CD14-positive monocyte (primary cell): ENCODE measurements at regions of chrX and their contacts with region 1.

Region 1: DNA sequence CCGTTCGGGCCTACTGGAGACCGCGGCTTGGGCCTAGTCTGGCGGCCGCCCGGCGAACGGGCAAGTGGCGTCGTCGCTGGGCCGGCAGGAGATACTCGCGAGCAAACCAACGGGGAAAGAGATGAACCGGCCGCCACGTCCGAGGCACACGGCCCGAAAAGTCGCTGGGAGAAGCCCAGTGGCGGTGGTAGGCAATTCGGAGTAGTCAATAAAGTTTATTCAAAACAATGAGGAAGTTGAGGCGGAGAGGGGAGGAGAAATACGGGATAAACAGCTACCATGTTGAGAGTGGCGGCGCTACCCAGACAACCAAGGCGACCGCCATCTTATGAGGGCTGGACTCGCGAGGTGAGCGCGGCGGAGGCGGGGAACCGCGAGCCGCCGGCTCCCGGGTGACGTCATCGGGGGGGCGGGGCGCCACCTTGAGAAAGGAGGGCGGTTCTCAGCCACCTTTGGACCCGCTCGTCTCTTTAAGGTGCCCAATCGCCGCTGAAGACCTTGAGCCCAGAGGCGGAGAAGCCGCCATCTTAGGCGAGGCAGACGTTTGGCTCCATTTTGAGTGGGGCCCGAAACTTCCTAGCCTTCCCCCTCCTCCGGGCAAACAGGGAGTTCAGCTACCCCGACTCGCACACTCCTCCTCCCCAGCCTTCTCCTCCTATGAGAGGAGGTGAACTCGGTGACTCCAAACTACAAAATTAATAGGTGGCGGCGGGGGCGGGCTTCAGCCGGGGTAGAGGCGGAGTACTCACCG is at the start of gene PHF8:
- DNase-seq: peak; percentile 88 to 94 (median 94)
- H3K4me3 ChIP-seq: peak within 1 kb of the TSS; percentile 67 to 86 (median 83)
- H3K4me3 Mint-ChIP-seq: peak within 1 kb of the TSS; percentile 91 to 96
- H3K27ac ChIP-seq: peak within 1 kb of the TSS; percentile 88 to 98
- H3K27ac Mint-ChIP-seq: peak within 1 kb of the TSS; percentile 98 to 99 (median 98)
- H3K4me1 ChIP-seq: peaks cover 16% of the 10 kb centered on the region in 2 donors
- H3K4me1 Mint-ChIP-seq: peaks cover 18% of the 10 kb centered on the region
- H3K27me3 ChIP-seq: no peaks in the 10 kb centered on the region
- H3K27me3 Mint-ChIP-seq: peaks cover 0 to 7% (median 0%) of the 10 kb centered on the region in 3 donors
- CTCF ChIP-seq: no peak
- polyA plus RNA-seq, gene PHF8: 10.5 to 20.3 (median 11.9) TPM

Region 2: GRCh38 chrX:53644751-53645150 is 399.6 kb before region 1 on chrX:
- intact Hi-C with region 1: no loop called
- DNase-seq: no peak
- H3K4me3 ChIP-seq: no peak overlapping the region
- H3K4me3 Mint-ChIP-seq: no peak overlapping the region
- H3K27ac ChIP-seq: no peak overlapping the region
- H3K27ac Mint-ChIP-seq: peak overlapping the region in 1 of 7 donors; percentile 11
- H3K4me1 ChIP-seq: no peaks in the 10 kb centered on the region
- H3K4me1 Mint-ChIP-seq: no peaks in the 10 kb centered on the region
- H3K27me3 ChIP-seq: no peaks in the 10 kb centered on the region
- H3K27me3 Mint-ChIP-seq: peaks cover 0 to 8% (median 0%) of the 10 kb centered on the region in 3 donors
- CTCF ChIP-seq: no peak

Region 3: DNA sequence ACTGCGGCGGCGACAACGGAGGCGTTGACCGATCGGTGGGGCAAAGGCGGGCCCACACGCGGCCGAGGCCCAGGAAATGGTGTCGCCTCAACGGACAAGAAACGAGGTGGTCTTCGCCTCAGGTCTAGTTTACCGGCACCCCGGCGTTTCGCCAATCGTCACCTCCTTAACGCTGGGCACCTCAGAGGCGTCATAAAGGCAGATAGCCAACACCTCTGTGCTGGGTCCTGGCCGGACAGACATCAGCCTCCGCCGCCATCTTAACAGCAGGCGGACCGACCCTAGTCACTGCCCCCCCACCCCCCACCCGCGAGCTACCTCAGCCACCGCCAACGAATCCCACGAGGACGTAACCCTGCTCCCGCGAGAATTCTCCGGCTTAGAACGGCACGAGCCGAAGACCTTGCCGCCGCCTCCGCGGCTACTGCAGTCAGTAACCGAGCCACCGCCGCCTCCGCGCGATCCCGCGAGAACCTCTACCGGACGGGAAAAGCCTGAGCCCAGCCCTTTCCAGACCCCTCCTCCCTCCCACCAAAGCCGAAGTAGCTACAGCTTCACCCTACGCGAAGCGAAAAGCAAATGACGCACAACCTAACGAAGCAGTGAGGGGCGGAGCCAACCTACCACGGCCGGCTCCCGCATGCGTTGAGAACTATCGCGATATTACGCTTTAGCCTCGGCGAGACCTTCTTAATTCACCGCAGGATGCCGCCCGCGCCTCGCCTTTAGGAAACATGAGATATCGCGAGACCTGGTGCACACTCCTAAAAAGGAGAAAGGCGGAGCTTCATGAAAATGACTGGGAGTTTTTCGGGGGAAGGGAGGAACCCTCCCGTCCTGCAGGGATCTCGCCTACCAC is 360.5 kb before region 1 on chrX:
- intact Hi-C with region 1: loop called (anchors 5 to 10 kb)
- DNase-seq: peak; percentile 96 to 97 (median 97)
- H3K4me3 ChIP-seq: peak overlapping the region; percentile 56 to 79 (median 72)
- H3K4me3 Mint-ChIP-seq: peak overlapping the region; percentile 82 to 87
- H3K27ac ChIP-seq: peak overlapping the region; percentile 89 to 97
- H3K27ac Mint-ChIP-seq: peak overlapping the region; percentile 94 to 98 (median 98)
- H3K4me1 ChIP-seq: peaks cover 22 to 28% of the 10 kb centered on the region in 2 donors
- H3K4me1 Mint-ChIP-seq: peaks cover 29% of the 10 kb centered on the region
- H3K27me3 ChIP-seq: no peaks in the 10 kb centered on the region
- H3K27me3 Mint-ChIP-seq: peaks cover 0 to 6% (median 2%) of the 10 kb centered on the region in 3 donors
- CTCF ChIP-seq: no peak

Region 4: DNA sequence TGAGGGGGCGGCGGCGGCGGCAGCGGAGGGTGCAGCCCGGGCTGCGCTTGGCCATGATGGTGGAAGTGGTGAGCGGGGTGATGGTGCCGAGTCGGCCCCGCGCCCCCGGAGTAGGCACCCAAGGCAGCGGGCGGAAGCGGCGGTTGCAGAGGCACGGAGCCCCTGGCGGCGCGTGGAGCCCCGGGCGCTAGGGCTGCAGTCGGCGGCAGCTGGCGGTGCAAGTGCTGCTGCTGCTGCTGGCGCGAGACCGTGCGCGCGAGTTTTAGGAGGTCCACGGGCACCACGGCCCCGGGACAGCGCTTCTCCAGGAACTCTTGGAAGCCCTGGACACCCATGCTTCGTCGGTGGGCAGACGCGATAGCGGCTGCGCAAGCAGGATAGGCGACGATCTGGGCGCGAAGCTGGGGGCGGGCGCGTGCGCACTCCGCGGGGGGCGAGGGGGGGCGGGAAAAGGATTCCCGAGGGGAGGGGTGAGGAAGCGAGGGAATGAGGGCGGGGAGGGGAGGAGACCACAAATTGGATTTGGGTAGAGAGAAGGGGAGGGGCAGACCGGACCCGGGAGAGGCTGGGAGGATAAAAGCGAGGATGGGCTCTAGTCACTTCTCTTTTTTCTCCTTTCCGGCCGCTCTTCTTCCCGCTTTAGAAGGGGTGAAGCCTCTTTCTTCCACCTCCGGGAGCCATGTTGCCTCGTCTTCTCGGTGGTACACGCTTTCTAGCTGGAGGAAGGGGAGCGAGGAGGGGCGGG is 138.7 kb after region 1 on chrX and contains the start of gene FAM120C:
- intact Hi-C with region 1: loop called in 1 of 2 experiments (anchors 5 kb)
- DNase-seq: peak; percentile 37 to 41 (median 41)
- H3K4me3 ChIP-seq: peak within 1 kb of the TSS; percentile 58 to 79 (median 77)
- H3K4me3 Mint-ChIP-seq: peak within 1 kb of the TSS; percentile 80 to 83
- H3K27ac ChIP-seq: peak within 1 kb of the TSS; percentile 50 to 61
- H3K27ac Mint-ChIP-seq: peak within 1 kb of the TSS; percentile 43 to 88 (median 75)
- H3K4me1 ChIP-seq: peaks cover 30 to 32% of the 10 kb centered on the region in 2 donors
- H3K4me1 Mint-ChIP-seq: peaks cover 37% of the 10 kb centered on the region
- H3K27me3 ChIP-seq: no peaks in the 10 kb centered on the region
- H3K27me3 Mint-ChIP-seq: peaks cover 0 to 6% (median 0%) of the 10 kb centered on the region in 3 donors
- CTCF ChIP-seq: no peak
- polyA plus RNA-seq, gene FAM120C: 1.7 to 2.6 (median 1.8) TPM

Region 5: GRCh38 chrX:54439967-54440871 is 395.9 kb after region 1 on chrX and contains the start of gene TSR2:
- intact Hi-C with region 1: loop called in 1 of 2 experiments (anchors 5 kb)
- DNase-seq: peak; percentile 67 to 76 (median 73)
- H3K4me3 ChIP-seq: peak within 1 kb of the TSS; percentile 84 to 94 (median 88)
- H3K4me3 Mint-ChIP-seq: peak within 1 kb of the TSS; percentile 88 to 96
- H3K27ac ChIP-seq: peak within 1 kb of the TSS in 1 of 2 donors; percentile 75
- H3K27ac Mint-ChIP-seq: peak within 1 kb of the TSS; percentile 16 to 90 (median 82)
- H3K4me1 ChIP-seq: peaks cover 12 to 17% of the 10 kb centered on the region in 2 donors
- H3K4me1 Mint-ChIP-seq: peaks cover 14% of the 10 kb centered on the region
- H3K27me3 ChIP-seq: no peaks in the 10 kb centered on the region
- H3K27me3 Mint-ChIP-seq: peaks cover 6 to 11% (median 6%) of the 10 kb centered on the region in 3 donors
- CTCF ChIP-seq: no peak
- polyA plus RNA-seq, gene TSR2: 11.8 to 18.0 (median 13.0) TPM

Region 6: DNA sequence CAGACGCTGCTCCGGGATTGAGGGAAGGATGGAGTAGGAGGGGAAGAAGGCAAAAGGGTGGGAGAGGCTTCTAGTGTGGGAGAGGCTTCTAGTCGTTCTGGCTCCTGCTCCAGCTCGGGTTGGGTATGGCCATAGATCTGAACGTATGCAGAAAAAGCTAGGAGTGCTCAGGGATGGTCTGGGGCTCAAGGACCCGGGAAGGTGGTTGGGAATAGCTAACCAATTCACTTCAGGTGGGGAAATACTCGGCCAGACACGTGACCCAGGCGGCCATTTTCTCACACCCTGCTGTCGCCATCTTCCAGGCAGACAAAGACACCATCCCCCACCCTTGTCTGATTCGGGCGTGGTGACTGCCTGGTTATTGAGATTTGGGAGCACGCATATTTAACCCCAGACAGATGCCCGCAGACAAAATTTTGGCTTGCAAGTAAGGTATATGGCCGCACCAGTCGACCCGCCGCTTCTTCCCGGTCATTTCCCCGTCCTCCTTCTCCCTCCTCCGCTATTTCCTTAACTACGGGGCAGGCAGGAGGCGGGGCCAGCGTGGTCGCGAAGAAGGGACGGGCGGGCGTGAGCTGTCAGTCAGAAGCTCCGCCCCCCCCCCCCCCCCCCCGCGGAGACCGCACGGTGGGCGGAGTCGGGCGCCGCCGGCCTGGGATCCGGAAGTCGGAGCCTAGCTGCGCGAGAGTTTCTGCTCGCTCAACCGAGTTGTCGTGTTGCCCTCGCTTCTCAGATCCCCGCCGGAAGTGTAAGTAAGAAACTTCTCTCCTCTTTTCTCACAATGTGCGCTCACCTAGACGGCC is 485.5 kb after region 1 on chrX and contains the start of gene GNL3L:
- intact Hi-C with region 1: loop called in 1 of 2 experiments (anchors 5 kb)
- DNase-seq: peak; percentile 75 to 88 (median 81)
- H3K4me3 ChIP-seq: peak within 1 kb of the TSS; percentile 92 to 97 (median 94)
- H3K4me3 Mint-ChIP-seq: peak within 1 kb of the TSS; percentile 87 to 93
- H3K27ac ChIP-seq: peak within 1 kb of the TSS; percentile 81 to 92
- H3K27ac Mint-ChIP-seq: peak within 1 kb of the TSS; percentile 86 to 99 (median 96)
- H3K4me1 ChIP-seq: peaks cover 17 to 24% of the 10 kb centered on the region in 2 donors
- H3K4me1 Mint-ChIP-seq: peaks cover 32% of the 10 kb centered on the region
- H3K27me3 ChIP-seq: no peaks in the 10 kb centered on the region
- H3K27me3 Mint-ChIP-seq: peaks cover 0 to 4% (median 0%) of the 10 kb centered on the region in 3 donors
- CTCF ChIP-seq: no peak
- polyA plus RNA-seq, gene GNL3L: 11.8 to 20.7 (median 18.1) TPM

Region 7: DNA sequence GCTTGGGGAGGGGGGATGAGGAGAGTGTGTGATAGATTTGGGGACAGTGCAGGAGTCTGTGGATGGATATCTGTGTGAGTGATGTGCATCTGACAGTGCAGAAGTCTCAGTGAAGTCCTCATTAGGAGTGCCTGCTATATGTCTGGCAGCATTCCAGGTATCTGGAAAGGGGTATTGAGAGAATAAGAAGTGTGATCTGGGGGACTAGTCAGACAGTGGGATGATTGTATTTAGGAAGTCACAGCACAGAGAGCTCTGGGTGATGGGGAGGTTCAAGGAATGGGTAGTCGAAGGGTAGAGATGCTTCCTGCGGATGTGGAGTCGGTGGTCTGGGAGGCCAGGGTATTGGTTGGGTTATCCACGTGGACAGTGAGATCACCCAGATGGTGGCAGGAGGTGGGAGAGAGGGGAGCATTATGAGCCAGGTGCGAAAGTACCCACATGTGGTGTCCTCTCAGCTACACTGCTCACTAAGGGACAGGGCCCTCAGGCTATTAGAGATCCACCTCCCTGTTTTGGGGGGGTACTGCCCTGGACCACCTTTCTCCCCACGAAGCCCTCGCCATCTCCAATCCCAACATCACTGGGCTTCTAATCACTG is 773.0 kb after region 1 on chrX:
- intact Hi-C with region 1: loop called in 1 of 2 experiments (anchors 10 kb)
- DNase-seq: no peak
- H3K4me3 ChIP-seq: no peak overlapping the region
- H3K4me3 Mint-ChIP-seq: no peak overlapping the region
- H3K27ac ChIP-seq: no peak overlapping the region
- H3K27ac Mint-ChIP-seq: no peak overlapping the region
- H3K4me1 ChIP-seq: no peaks in the 10 kb centered on the region
- H3K4me1 Mint-ChIP-seq: peaks cover 3% of the 10 kb centered on the region
- H3K27me3 ChIP-seq: no peaks in the 10 kb centered on the region
- H3K27me3 Mint-ChIP-seq: peaks cover 0 to 2% (median 1%) of the 10 kb centered on the region in 3 donors
- CTCF ChIP-seq: no peak